ENCODE measurements at regions of chr1 and their contacts with region 1.

Region 1: DNA sequence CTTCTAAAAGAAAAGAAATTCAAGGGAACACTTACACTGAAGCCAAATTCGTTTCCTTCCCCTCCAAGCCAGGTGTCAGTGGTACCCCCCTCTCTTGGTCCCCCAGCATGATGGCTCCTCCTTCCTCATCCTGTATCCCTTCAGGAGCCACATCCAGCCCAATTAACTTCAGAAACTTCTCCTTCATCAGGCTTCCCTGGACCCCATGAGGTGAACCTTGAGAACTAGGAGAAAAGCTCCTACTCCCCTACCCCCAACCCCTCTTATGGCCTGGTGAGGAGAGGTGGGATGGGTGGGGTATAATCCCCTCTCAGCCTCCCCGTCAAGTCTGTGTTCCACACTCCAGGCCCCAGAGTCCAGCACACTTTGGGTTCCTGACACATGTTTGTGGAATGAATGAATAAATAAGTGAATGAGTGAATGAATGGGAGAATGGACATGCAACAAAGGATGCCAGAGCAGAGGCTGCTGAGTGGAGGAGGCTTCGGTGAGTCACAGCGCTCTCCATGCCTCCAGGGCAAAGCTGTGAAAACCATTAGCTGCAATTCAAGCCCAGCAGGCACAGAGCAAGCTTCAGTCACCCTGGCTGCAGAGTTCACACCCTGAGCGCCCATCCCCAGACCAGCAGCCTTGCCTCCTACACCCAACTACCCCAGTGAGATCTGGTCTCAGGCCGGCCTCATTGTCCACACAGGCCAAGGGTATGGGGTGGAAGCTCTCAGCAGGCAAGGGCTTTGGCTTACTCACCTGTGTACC is 43.8 kb downstream of the BATF3 start:
- DNase-seq: no peak
- ATAC-seq: peak in 1 of 8 donors; percentile 27
- H3K4me3 ChIP-seq: no peak overlapping the region
- H3K27ac ChIP-seq: no peak overlapping the region
- H3K4me1 ChIP-seq: peaks cover 0 to 5% (median 0%) of the 10 kb centered on the region in 9 donors
- H3K27me3 ChIP-seq: no peaks in the 10 kb centered on the region
- CTCF ChIP-seq: no peak

Region 2: DNA sequence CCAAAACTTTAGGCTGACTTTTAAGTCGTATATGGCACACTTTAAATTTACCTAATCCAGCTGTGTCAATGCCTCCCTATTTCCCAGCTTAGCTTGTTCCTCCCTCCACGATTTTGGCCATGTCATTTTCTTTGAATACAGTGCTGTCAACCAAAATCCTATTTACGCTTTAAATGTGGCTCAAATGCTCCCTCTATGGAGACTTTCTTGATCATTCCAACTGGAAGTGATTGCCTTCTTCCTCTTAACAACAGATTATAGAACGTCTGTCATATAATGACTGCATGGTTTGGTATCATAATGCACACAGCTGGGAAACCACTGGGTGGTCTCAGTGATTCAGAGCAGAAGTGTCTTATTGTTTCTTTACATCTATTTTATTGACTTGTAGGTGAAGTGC is 62.7 kb after region 1 on chr1:
- intact Hi-C with region 1: loop called in 1 of 10 experiments (anchors 10 kb)
- DNase-seq: no peak
- ATAC-seq: no peak
- H3K4me3 ChIP-seq: no peak overlapping the region
- H3K27ac ChIP-seq: no peak overlapping the region
- H3K4me1 ChIP-seq: peaks cover 0 to 19% (median 0%) of the 10 kb centered on the region in 9 donors
- H3K27me3 ChIP-seq: peaks cover 0 to 7% (median 0%) of the 10 kb centered on the region in 7 donors
- CTCF ChIP-seq: peak in 6 of 9 donors; percentile 6 to 37 (median 20)

Region 3: GRCh38 chr1:212981571-212982328 is 325.9 kb after region 1 on chr1:
- intact Hi-C with region 1: loop called in 1 of 10 experiments (anchors 10 kb)
- DNase-seq: peak in 1 of 2 donors; percentile 25
- ATAC-seq: peak in 6 of 8 donors; percentile 25 to 61 (median 32)
- H3K4me3 ChIP-seq: no peak overlapping the region
- H3K27ac ChIP-seq: peak overlapping the region in 6 of 10 donors; percentile 2 to 55 (median 28)
- H3K4me1 ChIP-seq: peaks cover 7 to 37% (median 26%) of the 10 kb centered on the region in 9 donors
- H3K27me3 ChIP-seq: no peaks in the 10 kb centered on the region
- CTCF ChIP-seq: no peak

Region 4: DNA sequence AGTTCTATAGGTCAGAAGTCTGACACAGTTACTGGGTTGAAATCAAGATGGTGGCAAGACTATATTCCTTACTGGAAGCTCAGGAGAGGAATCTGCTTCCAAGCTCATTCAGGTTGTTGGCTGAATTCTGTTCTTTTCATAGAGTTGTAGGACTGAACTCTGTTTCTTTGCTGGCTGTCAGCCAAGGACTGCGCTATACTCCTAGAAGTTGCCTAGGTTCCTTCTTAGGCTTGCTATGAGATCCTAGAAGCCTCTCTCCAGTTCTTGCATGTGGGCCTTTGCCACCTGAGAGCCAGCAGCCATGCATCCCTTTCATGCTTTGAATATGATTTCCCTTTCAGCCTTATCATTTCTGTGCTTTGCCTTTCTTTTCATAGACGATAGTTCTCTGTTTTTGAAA is 571.6 kb after region 1 on chr1:
- intact Hi-C with region 1: no loop called
- DNase-seq: no peak
- ATAC-seq: no peak
- H3K4me3 ChIP-seq: no peak overlapping the region
- H3K27ac ChIP-seq: no peak overlapping the region
- H3K4me1 ChIP-seq: no peaks in the 10 kb centered on the region
- H3K27me3 ChIP-seq: no peaks in the 10 kb centered on the region
- CTCF ChIP-seq: no peak